ENCODE measurements at regions of chr21 and their contacts with region 1.

Region 1: GRCh38 chr21:39445321-39446269 is at the start of gene LCA5L:
- H3K4me3 ChIP-seq: peak within 1 kb of the TSS; percentile 84
- H3K27ac ChIP-seq: peak within 1 kb of the TSS; percentile 76
- H3K4me1 ChIP-seq: peaks cover 6% of the 10 kb centered on the region
- CTCF ChIP-seq: peak; percentile 89

Region 2: GRCh38 chr21:39232861-39233291 is 212.7 kb before region 1 on chr21:
- CTCF ChIA-PET with region 1: interaction called, 11 read pairs
- POLR2A ChIA-PET with region 1: no interaction called
- H3K4me3 ChIP-seq: no peak overlapping the region
- H3K27ac ChIP-seq: no peak overlapping the region
- H3K4me1 ChIP-seq: no peaks in the 10 kb centered on the region
- CTCF ChIP-seq: no peak

Region 3: DNA sequence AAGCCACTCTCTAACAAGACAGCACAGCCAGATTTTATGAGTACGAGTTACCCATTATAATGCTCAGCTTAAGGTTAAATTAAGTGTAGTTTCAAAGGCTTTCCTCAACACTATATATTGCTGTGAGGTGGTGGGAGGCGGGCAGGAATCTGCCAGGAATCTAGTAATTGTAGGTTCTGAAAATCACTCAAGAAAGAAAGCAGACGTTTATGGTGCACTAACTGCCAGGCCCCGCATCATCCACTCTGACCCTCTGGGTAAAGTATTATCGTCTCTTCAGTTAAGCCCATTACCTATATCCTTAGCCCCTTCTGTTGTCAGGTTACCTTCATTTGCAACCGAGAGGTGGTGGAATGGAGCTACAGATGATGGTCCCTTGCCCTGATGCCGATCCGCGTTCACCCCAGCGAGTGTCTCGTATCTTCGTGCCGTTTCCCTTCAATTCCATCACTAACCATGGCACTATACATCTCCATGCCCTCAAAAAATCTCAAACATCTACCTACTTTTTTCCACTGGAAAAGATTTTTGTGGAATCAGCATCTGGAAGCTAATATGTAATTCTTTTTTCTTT is 109.1 kb before region 1 on chr21:
- CTCF ChIA-PET with region 1: no interaction called
- POLR2A ChIA-PET with region 1: no interaction called
- H3K4me3 ChIP-seq: no peak overlapping the region
- H3K27ac ChIP-seq: no peak overlapping the region
- H3K4me1 ChIP-seq: peaks cover 5% of the 10 kb centered on the region; the same call in 1 of the 2 replicates
- CTCF ChIP-seq: no peak

Region 4: DNA sequence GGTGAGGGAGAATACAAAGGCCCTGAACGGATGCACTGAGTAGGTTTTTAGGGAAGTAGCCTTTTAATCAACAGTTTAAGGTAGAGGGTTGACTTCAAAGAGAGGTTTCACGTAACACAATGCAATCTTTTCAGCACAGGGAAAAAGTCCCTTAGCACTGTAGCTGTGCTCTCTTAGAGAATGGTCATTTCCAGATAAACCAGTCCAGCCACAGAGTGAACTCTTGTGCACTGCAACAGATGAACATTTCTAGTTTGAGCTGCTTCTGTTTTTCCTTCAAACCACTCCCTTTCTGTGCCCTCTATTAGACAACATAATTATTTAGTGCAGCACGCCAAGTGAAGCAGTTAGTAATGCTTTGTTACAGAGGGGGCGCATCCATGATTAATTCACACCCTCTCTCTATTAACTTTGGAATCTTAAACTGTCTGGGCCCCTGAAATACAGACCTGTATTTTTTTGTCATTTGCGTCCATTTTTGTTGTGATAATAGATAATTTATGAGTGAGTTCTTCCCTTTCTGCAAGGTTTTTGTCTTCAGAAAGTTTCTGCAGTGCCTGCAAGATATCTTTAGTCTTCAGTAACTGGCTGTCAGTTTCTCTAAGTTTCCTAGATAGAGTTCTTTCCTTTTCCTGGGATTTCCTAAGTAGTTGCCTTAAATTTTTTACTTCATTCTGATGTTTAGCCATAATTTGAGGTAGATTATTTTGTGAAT is 22.9 kb before region 1 on chr21:
- CTCF ChIA-PET with region 1: interaction called, 55 read pairs
- POLR2A ChIA-PET with region 1: interaction called, 3 read pairs
- H3K4me3 ChIP-seq: no peak overlapping the region
- H3K27ac ChIP-seq: no peak overlapping the region
- H3K4me1 ChIP-seq: no peaks in the 10 kb centered on the region
- CTCF ChIP-seq: no peak

Region 5: DNA sequence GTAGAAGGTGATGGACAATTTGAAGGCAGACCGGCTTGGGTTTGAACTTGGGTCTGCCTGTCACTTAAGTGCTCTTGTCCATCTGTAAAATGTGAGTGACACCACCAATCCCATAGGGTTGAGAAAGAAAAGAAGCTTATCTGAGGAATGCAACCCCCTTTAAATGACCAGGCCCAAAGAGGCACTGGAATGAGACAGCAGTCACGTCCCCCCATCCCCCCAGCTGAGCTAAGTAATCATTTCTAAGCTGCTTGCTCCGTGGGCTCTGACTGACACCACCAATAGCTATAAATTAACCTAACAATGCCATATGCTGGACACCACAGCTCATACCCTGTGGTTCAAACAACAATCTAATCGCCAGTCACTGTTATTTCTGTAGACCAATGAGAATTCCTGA is 15.1 kb before region 1 on chr21:
- CTCF ChIA-PET with region 1: interaction called, 55 read pairs
- POLR2A ChIA-PET with region 1: no interaction called
- H3K4me3 ChIP-seq: no peak overlapping the region
- H3K27ac ChIP-seq: no peak overlapping the region
- H3K4me1 ChIP-seq: no peaks in the 10 kb centered on the region
- CTCF ChIP-seq: no peak

Region 6: DNA sequence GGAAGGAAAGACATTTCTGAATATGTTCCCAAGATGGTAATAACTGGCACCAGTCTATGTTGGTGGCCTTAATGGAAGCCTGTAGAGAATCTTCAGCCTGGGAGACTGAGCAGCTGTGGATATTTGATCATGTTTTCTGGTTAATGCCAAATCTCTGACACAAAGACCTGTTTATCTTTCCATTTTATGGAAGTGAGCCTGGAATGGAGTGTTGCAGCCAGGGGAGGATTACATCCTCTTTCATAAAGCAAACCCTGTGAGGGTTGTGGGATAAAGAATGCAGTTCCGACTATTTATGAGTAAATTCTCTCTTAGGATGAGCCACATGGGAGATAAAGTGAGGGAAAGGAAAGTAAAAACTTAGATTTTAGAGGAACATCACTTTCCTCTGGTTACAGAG is 565.8 kb after region 1 on chr21:
- CTCF ChIA-PET with region 1: no interaction called
- POLR2A ChIA-PET with region 1: no interaction called
- H3K4me3 ChIP-seq: no peak overlapping the region
- H3K27ac ChIP-seq: no peak overlapping the region
- H3K4me1 ChIP-seq: no peaks in the 10 kb centered on the region
- CTCF ChIP-seq: no peak

Measured in HEK293 (cell line).